H1 (cell line): ENCODE measurements at regions of chr5 and their contacts with region 1.

Region 1: DNA sequence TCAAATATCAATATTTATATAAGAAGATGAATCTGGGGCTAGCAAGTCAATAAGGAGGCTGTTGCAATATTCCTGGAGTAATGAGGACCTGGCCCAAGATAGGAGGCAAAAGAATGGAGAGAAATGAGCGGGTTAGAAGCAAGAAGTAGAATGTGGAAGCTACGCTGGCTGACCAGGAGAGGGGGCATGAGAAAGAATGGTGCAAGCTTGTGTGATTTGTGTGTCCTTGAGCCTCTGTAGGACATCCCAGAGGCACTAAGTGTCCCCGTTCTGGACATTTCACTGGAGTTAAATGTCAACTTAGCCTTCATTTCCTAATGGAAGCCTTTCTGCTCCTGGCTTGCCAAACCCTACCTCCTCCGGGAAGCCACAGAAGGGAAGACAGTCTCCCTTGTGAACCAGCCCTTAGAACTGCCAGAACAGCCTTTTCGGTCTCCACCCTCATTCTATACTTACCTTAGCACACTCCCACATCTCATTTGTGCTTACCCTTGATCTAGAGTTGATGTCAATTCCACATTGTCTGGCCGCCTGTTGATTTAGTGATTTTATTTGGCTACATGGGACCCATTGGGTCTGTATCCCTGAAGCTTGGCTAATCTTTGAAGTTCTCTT is 6.6 kb upstream of the PDE6A start:
- DNase-seq: no peak
- H3K4me3 ChIP-seq: no peak overlapping the region
- H3K27ac ChIP-seq: no peak overlapping the region
- H3K4me1 ChIP-seq: no peaks in the 10 kb centered on the region
- H3K27me3 ChIP-seq: no peaks in the 10 kb centered on the region
- CTCF ChIP-seq: peak; percentile 27 to 56 (median 29); a peak in 3 of 4 replicates
- EP300 ChIP-seq: no peak
- POLR2A ChIP-seq: no peak
- RAD21 ChIP-seq: peak; percentile 10 to 29; a peak in 2 of 4 replicates

Region 2: GRCh38 chr5:149932445-149933350 is 18.5 kb before region 1 on chr5:
- CTCF ChIA-PET with region 1: interaction called, 14 read pairs
- POLR2A ChIA-PET with region 1: no interaction called
- DNase-seq: peak in 1 of 2 experiments; percentile 72
- H3K4me3 ChIP-seq: no peak overlapping the region
- H3K27ac ChIP-seq: no peak overlapping the region
- H3K4me1 ChIP-seq: peaks cover 0 to 3% (median 0%) of the 10 kb centered on the region in 4 experiments; a peak in 1 of 7 replicates
- H3K27me3 ChIP-seq: no peaks in the 10 kb centered on the region; a peak in 2 of 7 replicates
- CTCF ChIP-seq: peak; percentile 60 to 75 (median 67)
- EP300 ChIP-seq: no peak
- POLR2A ChIP-seq: no peak
- RAD21 ChIP-seq: peak; percentile 22 to 49